Posterior cingulate gyrus (tissue), 11 donors: ENCODE measurements at regions of chr1 and their contacts with region 1.

Region 1: GRCh38 chr1:42766741-42767509 is at the starts of genes C1orf50 and P3H1:
- DNase-seq: peak; percentile 99 to 100 (median 100)

Region 2: GRCh38 chr1:42657971-42658879 is 108.7 kb before region 1 on chr1 and contains the start of gene PPIH:
- intact Hi-C with region 1: loop called (anchors 1 kb)
- DNase-seq: peak; percentile 94 to 99 (median 96)

Region 3: GRCh38 chr1:42681741-42682483 is 85.0 kb before region 1 on chr1 and contains the start of gene YBX1:
- intact Hi-C with region 1: loop called (anchors 2 kb)
- DNase-seq: peak; percentile 92 to 99 (median 95)

Region 4: GRCh38 chr1:42816585-42817434 is 49.9 kb after region 1 on chr1 and contains the starts of genes ERMAP and SVBP:
- intact Hi-C with region 1: loop called (anchors 1 kb)
- DNase-seq: peak; percentile 87 to 99 (median 92)

Region 5: DNA sequence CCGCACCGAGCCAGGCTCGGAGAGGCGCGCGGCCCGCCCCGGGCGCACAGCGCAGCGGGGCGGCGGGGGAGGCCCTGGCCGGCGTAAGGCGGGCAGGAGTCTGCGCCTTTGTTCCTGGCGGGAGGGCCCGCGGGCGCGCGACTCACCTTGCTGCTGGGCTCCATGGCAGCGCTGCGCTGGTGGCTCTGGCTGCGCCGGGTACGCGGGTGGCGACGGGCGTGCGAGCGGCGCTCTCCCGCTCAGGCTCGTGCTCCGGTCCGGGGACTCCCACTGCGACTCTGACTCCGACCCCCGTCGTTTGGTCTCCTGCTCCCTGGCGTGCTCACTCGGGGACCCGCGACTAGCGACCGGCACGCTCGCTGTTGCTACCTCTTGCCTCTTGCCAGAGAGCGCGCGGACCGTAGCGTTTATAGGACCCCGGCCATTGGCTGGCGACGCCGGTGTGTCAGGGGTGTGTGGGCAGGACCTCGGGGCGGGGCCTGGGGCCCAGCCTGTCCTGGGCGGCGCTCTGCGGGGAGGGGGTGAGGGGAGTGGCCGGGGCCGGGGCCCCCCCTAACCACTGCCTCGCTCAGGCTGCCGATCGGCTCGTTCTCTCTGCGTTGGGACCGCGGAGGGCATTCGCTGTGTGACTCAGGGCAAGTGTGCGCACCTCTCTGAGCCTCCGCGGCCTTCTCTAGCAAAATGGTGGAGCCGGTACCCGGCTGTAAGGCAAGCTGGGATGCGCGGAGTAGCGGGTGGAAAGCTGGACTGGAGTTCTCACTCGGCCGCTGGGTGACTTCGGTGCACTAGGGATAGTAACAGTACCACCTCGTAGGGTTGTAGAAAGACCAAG is 191.8 kb after region 1 on chr1 and contains the start of gene SLC2A1:
- intact Hi-C with region 1: loop called (anchors 5 kb)
- DNase-seq: peak; percentile 90 to 99 (median 97)